ENCODE measurements at regions of chr10 and their contacts with region 1.

Region 1: DNA sequence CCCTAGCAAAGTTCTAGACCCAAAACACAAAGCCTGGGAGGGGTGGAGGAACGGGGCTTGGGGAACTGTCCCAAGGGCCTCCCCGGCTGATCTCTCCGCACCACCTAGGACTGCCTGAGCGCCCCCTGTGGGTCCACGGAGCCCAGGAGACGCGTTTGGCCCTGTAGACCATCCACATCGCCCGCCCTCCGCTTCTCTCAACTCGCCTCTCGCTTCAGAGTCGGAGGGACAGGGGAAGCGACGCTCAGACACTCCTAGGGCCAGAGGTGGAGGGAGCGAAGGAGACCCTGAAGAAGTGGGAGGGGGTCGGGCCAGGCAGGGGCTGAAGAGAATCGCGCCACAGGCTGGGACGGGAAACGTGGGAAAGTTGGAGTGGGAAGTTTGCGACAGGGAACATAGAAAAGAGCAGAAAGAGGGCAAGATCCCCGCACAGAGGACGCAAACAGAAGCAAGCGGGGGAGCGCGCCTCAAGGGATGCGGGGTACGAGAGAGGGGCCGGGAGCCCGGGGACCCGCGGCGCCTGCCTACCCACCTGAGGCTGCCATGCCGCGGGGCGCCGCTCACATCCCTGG is 378 bp downstream of the PIK3AP1 start:
- DNase-seq: peak; percentile 64
- H3K4me3 Mint-ChIP-seq: peak overlapping the region; percentile 84
- H3K27ac Mint-ChIP-seq: peak overlapping the region; percentile 22
- H3K4me1 Mint-ChIP-seq: peaks cover 6% of the 10 kb centered on the region
- H3K27me3 Mint-ChIP-seq: peaks cover 3% of the 10 kb centered on the region

Region 2: GRCh38 chr10:96374985-96375830 is 344.7 kb before region 1 on chr10:
- CTCF ChIA-PET with region 1: interaction called, 6 read pairs
- intact Hi-C with region 1: loop called (anchors 2 kb)
- DNase-seq: peak; percentile 89
- H3K4me3 Mint-ChIP-seq: peak overlapping the region; percentile 74
- H3K27ac Mint-ChIP-seq: no peak overlapping the region
- H3K4me1 Mint-ChIP-seq: peaks cover 6% of the 10 kb centered on the region
- H3K27me3 Mint-ChIP-seq: peaks cover 3% of the 10 kb centered on the region

Region 3: GRCh38 chr10:96695366-96695765 is 24.6 kb before region 1 on chr10:
- CTCF ChIA-PET with region 1: no interaction called
- intact Hi-C with region 1: loop called (anchors 1 kb)
- DNase-seq: peak; percentile 55
- H3K4me3 Mint-ChIP-seq: no peak overlapping the region
- H3K27ac Mint-ChIP-seq: peak overlapping the region; percentile 68
- H3K4me1 Mint-ChIP-seq: peaks cover 23% of the 10 kb centered on the region
- H3K27me3 Mint-ChIP-seq: no peaks in the 10 kb centered on the region